Lower leg skin (tissue), 4 donors: ENCODE measurements at regions of chr3 and their contacts with region 1.

Region 1: GRCh38 chr3:52144034-52144795 is 10.0 kb downstream of the POC1A start:
- DNase-seq: peak; percentile 85 to 96
- H3K4me3 ChIP-seq: no peak overlapping the region
- CTCF ChIP-seq: peak in 2 of 3 donors; percentile 73 to 85
- POLR2A ChIP-seq: no peak

Region 2: GRCh38 chr3:51941798-51942602 is 202.2 kb before region 1 on chr3 and contains the starts of genes PARP3 and RRP9:
- intact Hi-C with region 1: loop called (anchors 5 kb)
- DNase-seq: peak; percentile 100
- H3K4me3 ChIP-seq: peak within 1 kb of the TSS; percentile 59
- CTCF ChIP-seq: peak in 2 of 3 donors; percentile 87 to 96
- POLR2A ChIP-seq: no peak
- total RNA-seq, gene PARP3: 6.0 to 16.2 (median 9.0) TPM
- total RNA-seq, gene RRP9: 10.0 to 16.9 (median 14.0) TPM

Region 3: GRCh38 chr3:52001443-52001974 is 142.7 kb before region 1 on chr3:
- intact Hi-C with region 1: loop called (anchors 5 kb)
- DNase-seq: peak; percentile 67 to 95
- H3K4me3 ChIP-seq: no peak overlapping the region
- CTCF ChIP-seq: peak in 1 of 3 donors; percentile 86
- POLR2A ChIP-seq: no peak

Region 4: GRCh38 chr3:52108302-52109232 is 35.6 kb before region 1 on chr3:
- intact Hi-C with region 1: no loop called
- DNase-seq: no peak
- H3K4me3 ChIP-seq: no peak overlapping the region
- CTCF ChIP-seq: no peak
- POLR2A ChIP-seq: no peak